IMR-90 (cell line): ENCODE measurements at regions of chr12 and their contacts with region 1.

Region 1: GRCh38 chr12:87216436-87216835 is 812.8 kb downstream of the C12orf50 start:
- DNase-seq: peak; percentile 10
- ATAC-seq: no peak
- H3K4me3 ChIP-seq: no peak overlapping the region
- H3K27ac ChIP-seq: no peak overlapping the region
- H3K4me1 ChIP-seq: no peaks in the 10 kb centered on the region
- H3K27me3 ChIP-seq: no peaks in the 10 kb centered on the region
- CTCF ChIP-seq: no peak
- POLR2A ChIP-seq: no peak
- RAD21 ChIP-seq: no peak

Region 2: GRCh38 chr12:87066326-87066725 is 150.1 kb before region 1 on chr12:
- CTCF ChIA-PET with region 1: no interaction called
- POLR2A ChIA-PET with region 1: no interaction called
- dilution Hi-C with region 1: no loop called
- in situ Hi-C with region 1: no loop called
- intact Hi-C with region 1: loop called (anchors 5 kb)
- DNase-seq: no peak
- ATAC-seq: no peak
- H3K4me3 ChIP-seq: no peak overlapping the region
- H3K27ac ChIP-seq: no peak overlapping the region
- H3K4me1 ChIP-seq: no peaks in the 10 kb centered on the region
- H3K27me3 ChIP-seq: no peaks in the 10 kb centered on the region
- CTCF ChIP-seq: no peak
- POLR2A ChIP-seq: no peak
- RAD21 ChIP-seq: no peak

Region 3: GRCh38 chr12:87280893-87281292 is 64.5 kb after region 1 on chr12:
- CTCF ChIA-PET with region 1: no interaction called
- POLR2A ChIA-PET with region 1: no interaction called
- dilution Hi-C with region 1: no loop called
- in situ Hi-C with region 1: no loop called
- intact Hi-C with region 1: no loop called
- DNase-seq: no peak
- ATAC-seq: no peak
- H3K4me3 ChIP-seq: no peak overlapping the region
- H3K27ac ChIP-seq: no peak overlapping the region
- H3K4me1 ChIP-seq: no peaks in the 10 kb centered on the region
- H3K27me3 ChIP-seq: no peaks in the 10 kb centered on the region
- CTCF ChIP-seq: no peak
- POLR2A ChIP-seq: no peak
- RAD21 ChIP-seq: no peak